Naive thymus-derived CD4-positive, alpha-beta T cell (primary cell): ENCODE measurements at regions of chr6 and their contacts with region 1.

Region 1: GRCh38 chr6:16669227-16669626 is 92.0 kb downstream of the ATXN1 start:
- DNase-seq: peak in 1 of 9 donors; percentile 69
- ATAC-seq: peak; percentile 67
- H3K4me3 ChIP-seq: no peak overlapping the region
- H3K4me3 Mint-ChIP-seq: peak overlapping the region in 1 of 10 donors; percentile 80
- H3K27ac ChIP-seq: no peak overlapping the region
- H3K27ac Mint-ChIP-seq: peak overlapping the region in 2 of 9 donors; percentile 43 to 90
- H3K4me1 ChIP-seq: peaks cover 0 to 31% of the 10 kb centered on the region in 2 donors
- H3K4me1 Mint-ChIP-seq: peaks cover 17 to 52% (median 28%) of the 10 kb centered on the region in 7 donors
- H3K27me3 ChIP-seq: no peaks in the 10 kb centered on the region
- H3K27me3 Mint-ChIP-seq: no peaks in the 10 kb centered on the region

Region 2: DNA sequence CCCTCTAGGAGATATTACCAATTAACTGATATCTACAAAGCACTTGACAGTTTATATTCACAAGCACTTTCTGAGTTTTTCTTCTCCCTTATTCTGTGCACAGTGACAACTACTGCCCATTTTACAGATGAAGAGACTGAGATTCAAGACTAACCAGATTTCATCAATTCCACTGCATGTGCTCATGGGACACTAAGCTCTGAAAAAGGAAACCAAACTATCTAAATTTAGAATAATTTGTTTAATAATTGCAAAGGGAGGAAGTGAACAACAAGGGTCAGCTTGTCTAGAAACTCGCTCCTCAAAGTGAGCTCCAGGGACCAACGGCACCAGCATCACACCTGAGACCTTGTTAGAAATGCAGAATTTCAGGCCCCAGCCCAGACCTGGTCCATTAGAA is 591.2 kb before region 1 on chr6:
- CTCF ChIA-PET with region 1: no interaction called
- POLR2A ChIA-PET with region 1: no interaction called
- intact Hi-C with region 1: no loop called
- DNase-seq: no peak
- ATAC-seq: no peak
- H3K4me3 ChIP-seq: no peak overlapping the region
- H3K4me3 Mint-ChIP-seq: no peak overlapping the region
- H3K27ac ChIP-seq: no peak overlapping the region
- H3K27ac Mint-ChIP-seq: no peak overlapping the region
- H3K4me1 ChIP-seq: no peaks in the 10 kb centered on the region
- H3K4me1 Mint-ChIP-seq: no peaks in the 10 kb centered on the region
- H3K27me3 ChIP-seq: no peaks in the 10 kb centered on the region
- H3K27me3 Mint-ChIP-seq: peaks cover 0 to 7% (median 5%) of the 10 kb centered on the region in 5 donors

Region 3: GRCh38 chr6:16657768-16658167 is 11.5 kb before region 1 on chr6:
- CTCF ChIA-PET with region 1: no interaction called
- POLR2A ChIA-PET with region 1: no interaction called
- intact Hi-C with region 1: loop called in 1 of 2 experiments (anchors 1 kb)
- DNase-seq: no peak
- ATAC-seq: peak; percentile 5
- H3K4me3 ChIP-seq: no peak overlapping the region
- H3K4me3 Mint-ChIP-seq: peak overlapping the region in 1 of 10 donors; percentile 45
- H3K27ac ChIP-seq: no peak overlapping the region
- H3K27ac Mint-ChIP-seq: peak overlapping the region in 2 of 9 donors; percentile 11 to 93
- H3K4me1 ChIP-seq: peaks cover 0 to 61% of the 10 kb centered on the region in 2 donors
- H3K4me1 Mint-ChIP-seq: peaks cover 24 to 67% (median 30%) of the 10 kb centered on the region in 7 donors
- H3K27me3 ChIP-seq: no peaks in the 10 kb centered on the region
- H3K27me3 Mint-ChIP-seq: no peaks in the 10 kb centered on the region

Region 4: GRCh38 chr6:16684896-16685554 is 15.8 kb after region 1 on chr6:
- CTCF ChIA-PET with region 1: no interaction called
- POLR2A ChIA-PET with region 1: interaction called, 6 read pairs
- intact Hi-C with region 1: loop called in 1 of 2 experiments (anchors 1 kb)
- DNase-seq: peak in 3 of 9 donors; percentile 14 to 85 (median 52)
- ATAC-seq: peak; percentile 70
- H3K4me3 ChIP-seq: no peak overlapping the region
- H3K4me3 Mint-ChIP-seq: peak overlapping the region in 1 of 10 donors; percentile 54
- H3K27ac ChIP-seq: no peak overlapping the region
- H3K27ac Mint-ChIP-seq: peak overlapping the region in 3 of 9 donors; percentile 23 to 63 (median 30)
- H3K4me1 ChIP-seq: peaks cover 0 to 32% of the 10 kb centered on the region in 2 donors
- H3K4me1 Mint-ChIP-seq: peaks cover 4 to 70% (median 18%) of the 10 kb centered on the region in 7 donors
- H3K27me3 ChIP-seq: no peaks in the 10 kb centered on the region
- H3K27me3 Mint-ChIP-seq: no peaks in the 10 kb centered on the region

Region 5: DNA sequence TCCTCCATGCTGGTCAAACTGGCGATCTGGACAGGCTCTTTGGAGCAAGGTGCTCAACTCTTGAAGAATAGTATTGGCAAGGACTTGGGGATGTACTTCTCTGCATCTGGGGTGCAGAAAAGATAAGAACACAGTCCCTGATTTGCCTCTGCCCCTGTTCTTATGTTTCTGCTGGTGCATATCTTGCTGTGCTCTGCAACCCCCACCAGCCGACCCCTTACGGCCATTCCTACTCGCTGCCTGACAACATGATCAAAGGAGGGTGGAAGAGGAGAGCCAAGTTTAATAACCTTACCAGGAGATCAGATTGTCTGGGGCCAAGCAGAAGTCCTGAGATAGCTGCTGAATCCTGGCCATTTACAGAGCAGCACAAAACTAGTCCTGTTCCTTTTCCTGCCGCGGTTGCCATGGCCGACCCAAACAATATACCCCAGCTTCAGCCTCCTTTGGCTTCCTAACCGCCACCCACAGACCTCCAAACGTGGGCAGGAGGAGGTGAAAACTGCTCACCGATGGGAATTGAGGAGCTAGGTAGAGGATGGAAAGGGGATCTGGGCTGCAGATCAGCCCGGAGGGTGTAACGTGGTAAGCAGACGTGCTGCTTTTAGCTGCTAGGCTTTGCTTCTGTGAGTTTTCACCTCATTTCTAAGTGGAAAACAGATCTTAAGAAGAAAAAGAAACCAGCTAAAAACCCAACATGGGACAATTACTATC is 31.1 kb after region 1 on chr6:
- CTCF ChIA-PET with region 1: no interaction called
- POLR2A ChIA-PET with region 1: no interaction called
- intact Hi-C with region 1: no loop called
- DNase-seq: peak in 6 of 9 donors; percentile 14 to 63 (median 20)
- ATAC-seq: peak; percentile 61
- H3K4me3 ChIP-seq: peak overlapping the region; percentile 44
- H3K4me3 Mint-ChIP-seq: peak overlapping the region; percentile 45 to 87 (median 79)
- H3K27ac ChIP-seq: peak overlapping the region; percentile 23
- H3K27ac Mint-ChIP-seq: peak overlapping the region in 8 of 9 donors; percentile 0 to 89 (median 63)
- H3K4me1 ChIP-seq: peaks cover 10 to 57% of the 10 kb centered on the region in 2 donors
- H3K4me1 Mint-ChIP-seq: peaks cover 40 to 69% (median 42%) of the 10 kb centered on the region in 7 donors
- H3K27me3 ChIP-seq: no peaks in the 10 kb centered on the region
- H3K27me3 Mint-ChIP-seq: no peaks in the 10 kb centered on the region